Activated CD4-positive, alpha-beta T cell treated with anti-CD3 and anti-CD28 coated beads, Interleukin-2, amount 10 ng/mL, durations not matched to agents 24 days and 14 days (primary cell): ENCODE measurements at regions of chr2 and their contacts with region 1.

Region 1: GRCh38 chr2:111091811-111092211 is 28.9 kb upstream of the BCL2L11 start:
- DNase-seq: peak; percentile 53
- H3K4me3 Mint-ChIP-seq: no peak overlapping the region
- H3K27ac Mint-ChIP-seq: peak overlapping the region; percentile 6
- H3K4me1 Mint-ChIP-seq: peaks cover 13% of the 10 kb centered on the region
- H3K27me3 Mint-ChIP-seq: peaks cover 62% of the 10 kb centered on the region

Region 2: DNA sequence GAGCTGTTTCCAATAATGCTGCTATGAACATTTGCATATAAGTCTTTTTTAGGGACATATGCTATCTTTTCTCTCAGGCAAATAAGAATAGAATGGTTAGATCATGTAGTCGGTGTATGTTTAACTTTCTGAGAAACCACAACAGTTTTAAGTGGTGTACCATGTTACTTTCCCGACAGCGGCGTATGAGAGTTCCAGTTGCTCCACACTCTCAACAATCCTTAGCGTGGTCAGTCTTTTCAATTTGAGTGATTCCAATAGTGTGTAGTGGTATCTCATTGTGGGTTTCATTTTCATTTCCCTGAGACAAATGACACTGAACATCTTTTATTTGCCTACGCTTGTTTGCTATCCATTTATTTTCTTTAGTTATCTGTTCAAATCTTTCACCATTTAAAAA is 209.9 kb before region 1 on chr2:
- intact Hi-C with region 1: loop called (anchors 5 kb)
- DNase-seq: peak; percentile 58
- H3K4me3 Mint-ChIP-seq: no peak overlapping the region
- H3K27ac Mint-ChIP-seq: no peak overlapping the region
- H3K4me1 Mint-ChIP-seq: peaks cover 11% of the 10 kb centered on the region
- H3K27me3 Mint-ChIP-seq: peaks cover 49% of the 10 kb centered on the region

Region 3: DNA sequence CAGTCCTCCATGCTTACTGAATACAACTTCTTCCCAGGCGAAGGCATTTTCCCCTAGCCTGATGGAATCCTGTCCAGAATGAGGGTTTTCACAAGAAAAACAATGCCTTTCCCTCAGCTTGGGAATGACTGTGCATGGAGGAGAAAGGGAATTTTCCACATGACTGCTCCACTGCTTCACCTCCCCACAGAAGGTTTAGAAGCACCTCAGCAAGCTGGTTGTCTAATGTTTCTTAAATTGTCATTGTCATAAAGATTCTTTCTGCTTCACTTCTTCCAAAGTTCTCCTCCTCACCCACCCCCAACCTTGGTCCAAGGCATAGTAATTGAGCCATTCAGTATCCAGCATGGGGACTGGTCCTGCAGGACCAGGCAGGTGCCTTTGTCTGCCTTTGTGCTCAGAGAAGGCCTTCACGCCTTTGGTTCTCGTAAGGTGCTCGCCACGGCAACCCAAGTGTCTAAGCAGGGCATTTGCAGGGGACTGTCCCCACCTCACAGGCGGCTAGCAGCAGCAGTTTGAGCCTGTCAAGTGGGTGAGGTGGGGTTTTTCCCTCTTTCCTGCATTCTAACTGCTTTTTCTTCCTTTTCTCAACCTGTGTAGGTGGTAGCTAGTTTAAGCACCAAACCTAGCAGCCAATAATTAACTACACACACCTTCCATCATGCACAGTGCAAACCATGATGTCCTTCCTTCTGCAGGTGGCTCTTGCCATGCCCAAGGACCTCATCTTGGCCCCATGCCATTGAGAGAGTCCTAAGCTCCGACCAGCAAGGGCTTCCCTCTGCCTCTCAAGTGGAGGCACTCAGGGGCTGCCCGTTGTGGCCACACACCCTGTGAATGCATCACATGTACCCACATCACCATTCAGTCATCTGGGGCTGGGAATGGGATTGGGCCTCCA is 36.8 kb before region 1 on chr2:
- intact Hi-C with region 1: loop called (anchors 1 kb)
- DNase-seq: peak; percentile 61
- H3K4me3 Mint-ChIP-seq: peak overlapping the region; percentile 50
- H3K27ac Mint-ChIP-seq: peak overlapping the region; percentile 71
- H3K4me1 Mint-ChIP-seq: peaks cover 30% of the 10 kb centered on the region
- H3K27me3 Mint-ChIP-seq: peaks cover 41% of the 10 kb centered on the region

Region 4: DNA sequence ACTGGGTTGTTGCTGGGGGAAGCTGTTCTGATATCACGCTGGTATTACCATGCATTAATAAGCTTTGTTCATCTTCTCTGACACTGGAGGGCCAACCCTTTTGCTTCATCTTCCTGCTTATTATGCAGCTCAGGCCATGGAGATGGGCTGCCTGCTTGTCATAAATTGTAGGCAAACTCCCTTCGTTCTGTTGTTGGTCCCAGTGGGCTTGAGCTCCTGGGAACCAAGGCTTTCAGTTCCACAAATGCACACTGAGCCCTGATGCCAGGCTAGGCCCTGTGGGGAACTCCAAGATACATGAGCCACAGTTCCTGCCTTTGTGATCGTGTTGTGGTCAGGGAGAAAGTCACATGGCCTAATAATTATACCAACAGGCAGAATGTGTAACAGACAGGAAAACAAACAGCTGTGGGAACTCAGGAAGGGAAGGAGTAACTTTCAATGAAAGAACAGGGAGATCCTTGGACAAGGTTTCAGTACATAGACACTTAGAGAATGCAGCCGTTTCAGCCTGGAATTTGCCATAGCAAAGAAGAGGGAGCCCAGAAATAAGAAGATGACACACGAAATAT is 20.1 kb before region 1 on chr2:
- intact Hi-C with region 1: no loop called
- DNase-seq: peak; percentile 7
- H3K4me3 Mint-ChIP-seq: no peak overlapping the region
- H3K27ac Mint-ChIP-seq: no peak overlapping the region
- H3K4me1 Mint-ChIP-seq: no peaks in the 10 kb centered on the region
- H3K27me3 Mint-ChIP-seq: peaks cover 51% of the 10 kb centered on the region

Region 5: GRCh38 chr2:111111101-111111755 is 19.4 kb after region 1 on chr2:
- intact Hi-C with region 1: loop called (anchors 1 kb)
- DNase-seq: no peak
- H3K4me3 Mint-ChIP-seq: no peak overlapping the region
- H3K27ac Mint-ChIP-seq: peak overlapping the region; percentile 34
- H3K4me1 Mint-ChIP-seq: peaks cover 18% of the 10 kb centered on the region
- H3K27me3 Mint-ChIP-seq: peaks cover 55% of the 10 kb centered on the region

Region 6: GRCh38 chr2:111252436-111252835 is 160.6 kb after region 1 on chr2:
- intact Hi-C with region 1: no loop called
- DNase-seq: peak; percentile 50
- H3K4me3 Mint-ChIP-seq: no peak overlapping the region
- H3K27ac Mint-ChIP-seq: peak overlapping the region; percentile 39
- H3K4me1 Mint-ChIP-seq: peaks cover 10% of the 10 kb centered on the region
- H3K27me3 Mint-ChIP-seq: no peaks in the 10 kb centered on the region